ENCODE measurements at regions of chr4 and their contacts with region 1.

Region 1: GRCh38 chr4:15956179-15956850 is 6.7 kb downstream of the FGFBP2 start:
- DNase-seq: peak; percentile 72

Region 2: DNA sequence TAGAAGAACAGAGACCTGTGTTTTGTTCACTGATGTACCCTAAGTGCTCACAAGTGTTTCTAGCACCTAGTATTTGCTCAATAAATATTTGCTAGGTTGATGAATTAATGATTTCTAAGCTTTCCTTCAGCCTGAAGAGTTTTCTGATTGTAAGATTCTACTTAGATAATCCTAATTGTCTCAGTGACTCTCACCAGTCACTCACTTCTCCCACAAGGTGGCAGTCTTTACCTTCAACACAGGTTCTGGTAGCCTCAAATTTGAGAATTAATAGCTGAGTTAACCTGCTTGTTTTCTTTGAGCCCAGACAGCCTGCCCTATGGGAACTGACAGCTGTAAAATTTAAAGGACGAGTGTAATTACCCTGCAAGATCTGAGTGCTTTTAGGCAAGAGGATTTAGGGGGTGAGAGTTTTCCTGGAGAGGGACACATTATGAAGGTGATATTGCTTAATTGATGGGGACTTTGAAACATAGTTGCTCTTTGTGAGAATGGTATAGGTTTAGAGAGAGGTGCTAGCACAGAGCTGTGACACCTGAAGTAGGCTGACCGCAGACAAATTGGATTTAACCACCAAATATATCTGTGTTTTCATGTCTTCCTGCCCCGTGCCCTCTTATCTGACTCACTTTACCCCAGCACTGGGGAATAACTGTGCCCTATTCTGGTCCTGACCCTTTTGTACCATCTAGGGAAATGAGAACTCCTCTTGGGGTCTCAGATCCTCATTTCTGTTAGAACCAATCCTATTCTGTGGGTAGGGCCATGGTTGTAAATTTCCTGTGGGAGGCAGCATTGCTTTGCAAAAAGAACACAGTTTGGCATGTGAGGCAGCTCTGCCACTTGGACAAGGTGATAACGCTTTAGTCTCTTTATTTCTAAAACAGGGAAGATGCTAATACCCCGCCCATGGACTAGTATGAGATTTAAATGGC is 150.5 kb before region 1 on chr4:
- CTCF ChIA-PET with region 1: interaction called, 22 read pairs
- POLR2A ChIA-PET with region 1: no interaction called
- DNase-seq: peak; percentile 64

Region 3: DNA sequence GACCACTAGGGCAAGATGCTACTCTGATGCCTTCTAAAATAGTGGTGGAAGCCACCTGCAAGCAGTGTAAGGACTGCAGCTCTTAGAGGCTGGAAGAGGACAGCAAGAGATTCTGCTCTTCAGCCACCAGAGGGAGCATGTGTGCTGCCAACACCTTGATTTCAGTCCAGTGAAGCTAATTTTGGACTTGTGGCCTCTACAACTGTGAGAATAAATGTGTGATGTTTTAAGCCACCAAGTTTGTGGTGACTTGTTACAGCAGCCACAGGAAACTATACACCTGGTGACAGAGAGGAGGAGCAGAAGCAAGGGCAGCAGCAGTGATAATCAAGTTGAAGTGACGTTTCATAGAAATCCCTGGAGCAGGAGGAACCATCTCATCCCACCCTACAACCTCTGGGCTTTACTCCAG is 73.6 kb before region 1 on chr4:
- CTCF ChIA-PET with region 1: interaction called, 21 read pairs
- POLR2A ChIA-PET with region 1: no interaction called
- DNase-seq: peak; percentile 70

Measured in HEK293T (cell line).